Activated B cell treated with CpG ODN at 0.5 μM for 24 hours (primary cell): ENCODE measurements at regions of chr20 and their contacts with region 1.

Region 1: DNA sequence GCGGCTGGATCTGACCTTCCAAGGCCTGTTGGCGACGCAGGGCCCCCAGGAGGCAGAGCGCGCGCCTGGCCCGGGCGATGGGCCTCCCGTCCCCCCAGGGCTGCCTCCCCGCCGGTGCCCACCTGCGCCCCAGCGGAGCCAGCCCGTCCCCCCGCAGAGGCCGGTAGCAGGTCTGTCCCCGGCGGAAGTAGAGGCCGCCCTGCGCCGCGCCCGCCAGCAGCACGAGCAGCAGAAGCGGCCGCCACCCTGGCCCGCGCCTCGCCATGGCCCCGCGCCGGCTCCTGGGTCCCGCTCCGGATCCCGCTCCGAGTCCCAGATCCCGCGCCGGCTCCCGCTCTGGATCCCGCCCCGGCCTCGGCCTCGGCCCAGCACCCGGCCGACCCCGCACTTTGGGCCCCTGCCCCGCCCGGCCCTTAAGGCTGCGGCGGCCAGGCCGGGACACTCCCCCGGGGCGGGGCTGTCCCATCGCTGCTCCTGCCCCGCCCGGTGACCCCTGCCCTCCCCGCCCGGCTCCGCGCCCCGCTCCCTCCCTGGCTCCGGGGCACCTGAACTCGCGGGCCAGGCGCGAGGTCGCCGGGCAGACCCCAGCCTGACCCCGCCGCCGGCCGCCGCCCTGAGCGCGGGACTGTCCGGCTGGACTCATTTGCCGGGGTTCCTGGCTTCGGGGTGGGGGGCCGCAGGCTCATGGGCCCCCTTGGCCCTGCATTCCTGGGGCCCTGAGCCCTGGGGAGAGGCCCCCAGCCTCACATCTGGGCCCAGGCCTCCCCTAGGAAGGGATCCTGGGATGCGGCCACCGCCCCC is at the start of gene CTSZ:
- DNase-seq: peak; percentile 65
- ATAC-seq: peak; percentile 25
- H3K4me3 Mint-ChIP-seq: peak within 1 kb of the TSS; percentile 95
- H3K27ac Mint-ChIP-seq: peak within 1 kb of the TSS; percentile 99
- H3K4me1 Mint-ChIP-seq: peaks cover 61% of the 10 kb centered on the region
- H3K27me3 Mint-ChIP-seq: no peaks in the 10 kb centered on the region
- CTCF ChIP-seq: no peak
- total RNA-seq, gene CTSZ: 262 and 278 TPM in 2 replicates

Region 2: DNA sequence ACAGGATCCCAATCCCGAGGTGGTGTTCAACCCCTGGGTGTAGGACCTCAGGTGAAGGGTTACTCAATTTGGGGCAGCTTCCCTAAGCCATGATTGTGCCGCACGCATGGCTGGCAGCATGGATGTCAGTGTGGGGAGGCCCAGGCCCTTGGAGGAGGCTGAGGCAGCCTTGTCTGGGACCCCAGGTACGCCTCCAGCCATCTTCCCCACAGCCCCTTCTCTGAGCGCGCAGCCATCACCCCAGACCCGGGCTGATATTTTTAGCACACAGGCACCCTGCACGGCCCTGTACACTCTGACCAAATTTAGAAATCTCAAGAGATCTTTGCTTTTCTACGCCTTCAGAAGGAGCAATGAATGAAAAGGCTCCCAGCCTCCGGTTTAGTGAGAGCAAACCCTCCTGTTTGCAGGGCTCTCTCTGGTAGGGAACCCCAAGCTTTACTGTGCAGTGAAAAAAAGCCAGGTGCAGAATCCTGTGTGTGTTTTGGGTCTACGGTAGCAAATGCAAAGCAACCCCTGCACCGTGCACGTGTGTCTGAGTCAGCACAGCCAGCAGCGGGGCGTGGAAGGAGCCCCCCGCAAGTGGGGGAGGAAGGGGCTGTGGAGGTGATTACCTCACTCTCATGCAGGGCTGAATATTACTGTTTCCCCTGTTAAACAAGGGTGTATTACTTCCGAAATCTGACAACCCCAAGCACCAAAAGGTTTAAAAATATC is 1526.5 kb before region 1 on chr20:
- CTCF ChIA-PET with region 1: no interaction called
- POLR2A ChIA-PET with region 1: no interaction called
- intact Hi-C with region 1: loop called (anchors 10 kb)
- DNase-seq: peak; percentile 64
- ATAC-seq: peak; percentile 69
- H3K4me3 Mint-ChIP-seq: peak overlapping the region; percentile 73
- H3K27ac Mint-ChIP-seq: peak overlapping the region; percentile 81
- H3K4me1 Mint-ChIP-seq: peaks cover 82% of the 10 kb centered on the region
- H3K27me3 Mint-ChIP-seq: no peaks in the 10 kb centered on the region
- CTCF ChIP-seq: no peak

Region 3: DNA sequence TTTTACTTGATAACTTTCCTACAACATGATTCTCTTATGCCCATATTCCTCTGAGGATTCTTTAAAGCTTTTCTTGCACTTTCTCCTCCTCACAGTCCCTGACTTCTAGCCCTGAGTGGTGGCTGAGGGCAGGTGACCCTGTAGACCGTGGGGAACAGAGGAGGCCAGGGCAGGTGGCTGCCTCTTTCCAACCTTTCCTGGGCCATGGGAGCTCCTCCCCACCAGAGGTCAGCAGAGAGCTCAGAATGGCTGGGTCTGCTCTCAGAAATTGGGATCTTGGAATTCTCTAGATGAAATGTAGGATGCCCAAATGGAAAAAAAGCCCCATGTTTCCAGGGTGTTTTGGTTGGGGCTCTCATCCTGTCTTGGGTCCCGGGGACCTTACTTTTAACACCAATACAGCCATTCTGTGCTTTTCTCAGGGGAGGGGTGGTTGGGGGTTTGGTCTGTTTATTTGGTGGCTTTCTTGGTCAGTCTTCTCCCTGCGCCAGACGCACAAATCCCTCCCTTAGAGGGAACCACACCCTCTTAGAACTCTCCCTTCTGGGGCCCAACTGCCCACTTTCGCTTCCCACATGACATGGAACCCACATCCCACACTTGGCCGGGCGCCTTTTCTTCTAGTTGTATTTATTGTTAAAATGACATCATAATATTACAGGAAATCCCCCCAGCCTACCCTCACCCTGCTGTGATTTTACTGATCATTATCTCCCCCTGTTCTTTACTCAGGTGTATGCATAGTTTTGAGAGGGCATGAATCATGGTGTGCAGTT is 136.6 kb before region 1 on chr20:
- CTCF ChIA-PET with region 1: no interaction called
- POLR2A ChIA-PET with region 1: no interaction called
- intact Hi-C with region 1: loop called (anchors 1 kb)
- DNase-seq: peak; percentile 37
- ATAC-seq: peak; percentile 84
- H3K4me3 Mint-ChIP-seq: no peak overlapping the region
- H3K27ac Mint-ChIP-seq: peak overlapping the region; percentile 41
- H3K4me1 Mint-ChIP-seq: peaks cover 11% of the 10 kb centered on the region
- H3K27me3 Mint-ChIP-seq: no peaks in the 10 kb centered on the region
- CTCF ChIP-seq: peak; percentile 83

Region 4: DNA sequence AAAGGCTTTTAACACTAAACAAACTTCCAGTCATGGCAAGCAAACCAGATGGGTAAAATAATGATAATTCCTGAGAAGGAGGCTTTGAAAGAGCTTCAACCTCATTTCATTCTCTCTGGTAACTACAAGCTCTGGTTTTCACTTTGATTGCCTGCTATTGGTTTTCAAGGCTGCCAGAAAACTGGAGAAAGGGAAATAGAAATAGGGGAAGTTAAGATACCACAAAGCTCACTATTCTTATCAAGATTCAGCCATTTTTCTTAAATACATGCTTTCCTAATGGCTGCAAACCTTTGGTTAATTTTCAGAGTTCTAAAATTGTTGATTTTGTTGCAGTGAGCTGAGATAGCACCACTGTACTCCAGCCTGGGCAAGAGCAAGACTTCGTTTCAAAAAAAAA is 68.5 kb before region 1 on chr20:
- CTCF ChIA-PET with region 1: no interaction called
- POLR2A ChIA-PET with region 1: interaction called, 10 read pairs
- intact Hi-C with region 1: no loop called
- DNase-seq: no peak
- ATAC-seq: no peak
- H3K4me3 Mint-ChIP-seq: no peak overlapping the region
- H3K27ac Mint-ChIP-seq: peak overlapping the region; percentile 24
- H3K4me1 Mint-ChIP-seq: peaks cover 15% of the 10 kb centered on the region
- H3K27me3 Mint-ChIP-seq: no peaks in the 10 kb centered on the region
- CTCF ChIP-seq: no peak

Region 5: GRCh38 chr20:59023616-59024015 is 16.6 kb after region 1 on chr20:
- CTCF ChIA-PET with region 1: no interaction called
- POLR2A ChIA-PET with region 1: interaction called, 22 read pairs
- intact Hi-C with region 1: no loop called
- DNase-seq: no peak
- ATAC-seq: no peak
- H3K4me3 Mint-ChIP-seq: no peak overlapping the region
- H3K27ac Mint-ChIP-seq: no peak overlapping the region
- H3K4me1 Mint-ChIP-seq: peaks cover 22% of the 10 kb centered on the region
- H3K27me3 Mint-ChIP-seq: no peaks in the 10 kb centered on the region
- CTCF ChIP-seq: no peak

Region 6: DNA sequence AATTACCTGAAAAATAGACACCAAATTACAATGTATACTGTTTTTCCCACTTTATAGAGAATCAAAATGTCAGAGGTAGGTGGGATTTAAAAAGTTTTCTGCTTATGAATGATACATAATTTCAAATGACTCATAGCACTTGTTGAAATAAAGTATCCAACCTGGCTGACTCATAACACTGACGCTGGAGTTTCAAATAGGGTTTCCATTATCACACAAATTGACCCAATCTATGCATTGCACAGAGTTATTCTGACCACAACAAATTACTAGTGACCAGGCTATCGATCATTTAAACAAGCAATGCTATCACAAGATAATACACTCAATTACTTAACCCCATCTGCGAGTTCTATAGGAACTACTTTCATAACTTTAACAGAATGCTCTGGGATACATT is 67.4 kb after region 1 on chr20:
- CTCF ChIA-PET with region 1: no interaction called
- POLR2A ChIA-PET with region 1: no interaction called
- intact Hi-C with region 1: loop called (anchors 2 kb)
- DNase-seq: no peak
- ATAC-seq: no peak
- H3K4me3 Mint-ChIP-seq: no peak overlapping the region
- H3K27ac Mint-ChIP-seq: no peak overlapping the region
- H3K4me1 Mint-ChIP-seq: peaks cover 31% of the 10 kb centered on the region
- H3K27me3 Mint-ChIP-seq: peaks cover 18% of the 10 kb centered on the region
- CTCF ChIP-seq: no peak